B cell (primary cell): ENCODE measurements at regions of chr2 and their contacts with region 1.

Region 1: DNA sequence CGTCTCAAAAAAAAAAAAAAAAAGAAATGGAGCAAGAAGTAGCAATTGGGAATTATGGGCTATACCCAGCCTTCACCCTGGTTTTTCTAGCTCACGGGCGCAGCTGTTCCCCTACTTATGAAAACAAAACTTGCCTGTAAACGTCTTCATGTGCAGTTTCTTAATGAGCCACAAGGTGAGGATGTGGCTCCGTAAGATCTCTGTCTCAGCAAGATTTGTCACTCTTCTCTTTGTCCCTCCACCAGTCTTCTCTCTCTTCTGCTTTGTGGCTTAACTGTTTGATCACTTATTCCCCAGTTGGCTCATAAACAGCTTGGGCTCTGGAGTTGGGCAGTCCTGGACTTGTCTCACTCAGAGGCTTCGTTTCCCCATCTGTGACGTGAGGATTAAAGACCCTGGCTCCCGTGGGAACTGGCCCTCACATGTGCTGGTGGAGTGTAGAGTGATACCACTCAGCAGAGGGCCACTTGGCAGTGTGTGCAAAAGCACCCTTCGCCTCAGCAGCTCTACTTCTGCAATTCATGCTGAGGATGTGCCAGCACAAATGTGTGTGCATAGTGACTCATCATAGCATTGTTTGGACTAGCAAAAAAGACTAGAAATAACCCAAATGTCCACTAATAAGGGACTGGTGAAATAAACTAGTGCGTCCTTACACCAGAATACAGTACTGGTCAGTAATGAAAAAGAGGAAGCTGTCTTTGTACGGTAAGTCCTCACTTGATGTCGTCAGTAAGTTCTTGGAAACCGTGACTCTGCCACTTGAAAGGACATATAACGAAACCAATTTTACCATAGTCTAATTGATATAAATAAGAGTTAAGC is 8.7 kb downstream of the CEP68 start:
- DNase-seq: peak; percentile 88
- ATAC-seq: peak; percentile 88
- H3K4me3 ChIP-seq: peak overlapping the region in 1 of 5 experiments; percentile 19
- H3K4me3 Mint-ChIP-seq: peak overlapping the region; percentile 63
- H3K27ac ChIP-seq: peak overlapping the region; percentile 20 to 54
- H3K27ac Mint-ChIP-seq: peak overlapping the region; percentile 90
- H3K4me1 ChIP-seq: peaks cover 13 to 26% of the 10 kb centered on the region in 2 donors
- H3K4me1 Mint-ChIP-seq: peaks cover 34% of the 10 kb centered on the region
- H3K27me3 ChIP-seq: no peaks in the 10 kb centered on the region
- H3K27me3 Mint-ChIP-seq: no peaks in the 10 kb centered on the region
- CTCF ChIP-seq: peak; percentile 89

Region 2: DNA sequence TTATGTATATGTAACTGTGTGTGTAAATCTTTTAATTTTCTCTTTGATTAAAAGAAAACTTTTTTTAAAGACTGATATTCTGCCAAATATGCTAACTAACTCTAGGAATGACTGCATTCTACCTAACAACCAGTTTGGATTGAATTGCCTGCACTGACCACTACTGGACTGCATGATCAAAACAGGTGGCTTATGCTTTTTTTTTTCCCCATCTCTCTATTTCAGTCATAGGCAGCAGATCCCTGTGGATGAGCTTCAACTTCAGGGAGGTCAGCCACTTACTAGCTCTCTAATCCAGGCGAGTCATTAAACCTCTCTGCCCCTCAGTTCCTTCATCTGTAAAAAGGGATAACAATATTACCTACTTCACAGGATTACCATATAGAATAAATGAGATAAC is 272.6 kb before region 1 on chr2:
- CTCF ChIA-PET with region 1: no interaction called
- POLR2A ChIA-PET with region 1: no interaction called
- intact Hi-C with region 1: no loop called
- DNase-seq: no peak
- ATAC-seq: no peak
- H3K4me3 ChIP-seq: no peak overlapping the region
- H3K4me3 Mint-ChIP-seq: no peak overlapping the region
- H3K27ac ChIP-seq: no peak overlapping the region
- H3K27ac Mint-ChIP-seq: no peak overlapping the region
- H3K4me1 ChIP-seq: peaks cover under 1 to 1% of the 10 kb centered on the region in 2 donors
- H3K4me1 Mint-ChIP-seq: peaks cover 1% of the 10 kb centered on the region
- H3K27me3 ChIP-seq: no peaks in the 10 kb centered on the region
- H3K27me3 Mint-ChIP-seq: no peaks in the 10 kb centered on the region
- CTCF ChIP-seq: no peak

Region 3: GRCh38 chr2:64899081-64899865 is 165.7 kb before region 1 on chr2:
- CTCF ChIA-PET with region 1: no interaction called
- POLR2A ChIA-PET with region 1: no interaction called
- intact Hi-C with region 1: no loop called
- DNase-seq: no peak
- ATAC-seq: no peak
- H3K4me3 ChIP-seq: no peak overlapping the region
- H3K4me3 Mint-ChIP-seq: no peak overlapping the region
- H3K27ac ChIP-seq: no peak overlapping the region
- H3K27ac Mint-ChIP-seq: no peak overlapping the region
- H3K4me1 ChIP-seq: peaks cover 4 to 9% of the 10 kb centered on the region in 2 donors
- H3K4me1 Mint-ChIP-seq: peaks cover 8% of the 10 kb centered on the region
- H3K27me3 ChIP-seq: no peaks in the 10 kb centered on the region
- H3K27me3 Mint-ChIP-seq: no peaks in the 10 kb centered on the region
- CTCF ChIP-seq: no peak

Region 4: GRCh38 chr2:65129826-65130663 is 65.1 kb after region 1 on chr2 and contains the start of gene RAB1A:
- CTCF ChIA-PET with region 1: interaction called, 14 read pairs
- POLR2A ChIA-PET with region 1: interaction called, 5 read pairs
- intact Hi-C with region 1: loop called (anchors 2 kb)
- DNase-seq: peak; percentile 99
- ATAC-seq: peak; percentile 88
- H3K4me3 ChIP-seq: peak within 1 kb of the TSS; percentile 96 to 97 (median 97)
- H3K4me3 Mint-ChIP-seq: peak within 1 kb of the TSS; percentile 100
- H3K27ac ChIP-seq: peak within 1 kb of the TSS; percentile 94 to 98
- H3K27ac Mint-ChIP-seq: peak within 1 kb of the TSS; percentile 100
- H3K4me1 ChIP-seq: peaks cover 23 to 25% of the 10 kb centered on the region in 2 donors
- H3K4me1 Mint-ChIP-seq: peaks cover 38% of the 10 kb centered on the region
- H3K27me3 ChIP-seq: no peaks in the 10 kb centered on the region
- H3K27me3 Mint-ChIP-seq: no peaks in the 10 kb centered on the region
- CTCF ChIP-seq: no peak
- total RNA-seq, gene RAB1A: 42.2 and 43.7 TPM in 2 replicates

Region 5: DNA sequence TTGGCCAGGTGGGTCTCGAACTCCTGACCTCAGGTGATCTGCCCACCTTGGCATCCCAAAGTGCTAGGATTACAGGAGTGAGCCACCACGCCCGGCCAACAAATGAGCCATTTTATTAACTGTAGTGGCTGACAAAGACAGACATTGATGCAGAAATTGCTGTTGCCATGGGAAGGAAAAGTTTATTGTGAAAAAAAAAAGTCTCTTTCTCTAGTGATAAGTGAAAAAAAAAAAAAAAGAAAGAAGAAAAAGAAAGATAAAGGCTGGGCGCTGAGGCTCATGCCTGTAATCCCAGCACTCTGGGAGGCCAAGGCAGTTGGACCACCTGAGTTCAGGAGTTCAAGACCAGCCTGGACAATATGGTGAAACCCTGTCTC is 104.8 kb after region 1 on chr2:
- CTCF ChIA-PET with region 1: interaction called, 96 read pairs
- POLR2A ChIA-PET with region 1: no interaction called
- intact Hi-C with region 1: loop called (anchors 1 kb)
- DNase-seq: no peak
- ATAC-seq: no peak
- H3K4me3 ChIP-seq: no peak overlapping the region
- H3K4me3 Mint-ChIP-seq: no peak overlapping the region
- H3K27ac ChIP-seq: no peak overlapping the region
- H3K27ac Mint-ChIP-seq: no peak overlapping the region
- H3K4me1 ChIP-seq: peaks cover 8 to 10% of the 10 kb centered on the region in 2 donors
- H3K4me1 Mint-ChIP-seq: peaks cover 12% of the 10 kb centered on the region
- H3K27me3 ChIP-seq: no peaks in the 10 kb centered on the region
- H3K27me3 Mint-ChIP-seq: no peaks in the 10 kb centered on the region
- CTCF ChIP-seq: no peak

Region 6: GRCh38 chr2:65227425-65228262 is 162.7 kb after region 1 on chr2 and contains the start of gene ACTR2:
- CTCF ChIA-PET with region 1: interaction called, 3 read pairs
- POLR2A ChIA-PET with region 1: interaction called, 4 read pairs
- intact Hi-C with region 1: loop called (anchors 2 kb)
- DNase-seq: peak; percentile 97
- ATAC-seq: peak; percentile 90
- H3K4me3 ChIP-seq: peak within 1 kb of the TSS; percentile 86 to 100 (median 98)
- H3K4me3 Mint-ChIP-seq: peak within 1 kb of the TSS; percentile 93
- H3K27ac ChIP-seq: peak within 1 kb of the TSS; percentile 97
- H3K27ac Mint-ChIP-seq: peak within 1 kb of the TSS; percentile 100
- H3K4me1 ChIP-seq: peaks cover 39 to 44% of the 10 kb centered on the region in 2 donors
- H3K4me1 Mint-ChIP-seq: peaks cover 37% of the 10 kb centered on the region
- H3K27me3 ChIP-seq: no peaks in the 10 kb centered on the region
- H3K27me3 Mint-ChIP-seq: no peaks in the 10 kb centered on the region
- CTCF ChIP-seq: no peak
- total RNA-seq, gene ACTR2: 270 and 284 TPM in 2 replicates

Region 7: GRCh38 chr2:65576861-65577601 is 512.1 kb after region 1 on chr2:
- CTCF ChIA-PET with region 1: interaction called, 17 read pairs
- POLR2A ChIA-PET with region 1: no interaction called
- intact Hi-C with region 1: no loop called
- DNase-seq: no peak
- ATAC-seq: no peak
- H3K4me3 ChIP-seq: no peak overlapping the region
- H3K4me3 Mint-ChIP-seq: no peak overlapping the region
- H3K27ac ChIP-seq: no peak overlapping the region
- H3K27ac Mint-ChIP-seq: no peak overlapping the region
- H3K4me1 ChIP-seq: peaks cover 0 to 2% of the 10 kb centered on the region in 2 donors
- H3K4me1 Mint-ChIP-seq: peaks cover 6% of the 10 kb centered on the region
- H3K27me3 ChIP-seq: no peaks in the 10 kb centered on the region
- H3K27me3 Mint-ChIP-seq: no peaks in the 10 kb centered on the region
- CTCF ChIP-seq: no peak